Activated CD4-positive, alpha-beta memory T cell treated with anti-CD3 and anti-CD28 coated beads, Interleukin-2, amount 10 ng/mL, durations not matched to agents 7 days and 5 days (primary cell): ENCODE measurements at regions of chr7 and their contacts with region 1.

Region 1: DNA sequence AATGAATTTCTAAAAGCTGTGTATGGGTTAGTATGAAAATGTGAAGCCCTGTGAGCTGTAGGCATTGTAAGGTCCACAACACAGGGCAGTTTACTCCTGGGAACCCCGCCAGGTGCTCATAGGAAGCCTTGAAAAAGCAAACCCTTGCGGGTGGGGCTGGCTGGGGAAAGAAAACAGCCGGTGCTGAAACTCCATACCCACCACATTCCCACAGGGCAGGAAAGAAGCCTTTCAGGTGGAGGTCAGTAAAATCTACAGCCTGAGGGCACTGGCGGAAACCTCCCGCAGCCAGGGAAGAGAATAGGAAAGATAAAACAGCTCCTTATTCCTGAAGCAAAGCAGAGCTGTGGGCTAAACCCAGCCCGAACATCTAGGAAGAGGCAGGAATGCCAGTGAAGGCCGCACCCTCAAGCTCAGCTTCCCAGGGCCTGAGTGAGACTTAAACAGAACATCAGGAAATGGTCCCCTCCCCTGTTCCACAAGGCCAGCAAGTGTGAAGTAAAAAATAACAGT is 34.7 kb downstream of the PODXL start:
- DNase-seq: no peak
- H3K4me3 Mint-ChIP-seq: peak overlapping the region; percentile 4
- H3K27ac Mint-ChIP-seq: peak overlapping the region; percentile 61
- H3K4me1 Mint-ChIP-seq: peaks cover 17% of the 10 kb centered on the region
- H3K27me3 Mint-ChIP-seq: peaks cover 7% of the 10 kb centered on the region

Region 2: DNA sequence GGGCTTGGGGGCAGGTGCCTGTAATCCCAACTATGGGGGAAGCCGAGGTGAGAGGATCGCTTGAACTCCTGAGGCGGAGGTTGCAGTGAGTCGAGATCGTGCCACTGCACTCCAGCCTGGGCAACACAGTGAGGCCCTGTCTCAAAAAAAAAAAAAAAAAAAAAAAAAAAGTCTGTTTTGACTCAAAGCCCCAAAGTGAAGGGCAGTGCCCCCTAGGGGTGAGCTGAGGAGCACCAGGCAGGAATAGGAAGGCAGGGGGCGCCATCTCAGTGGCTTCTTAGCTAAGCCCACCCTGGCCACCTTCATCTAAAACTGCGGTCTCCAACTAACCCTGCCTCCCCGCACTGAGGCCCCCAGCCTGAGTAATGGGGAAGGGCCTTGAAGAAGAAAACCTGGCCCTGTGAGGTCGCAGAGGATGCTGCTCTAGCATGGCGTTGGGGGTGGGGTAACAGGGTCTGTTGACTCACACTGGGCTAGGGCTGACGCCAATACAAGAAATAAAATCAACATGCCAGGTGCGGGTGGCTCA is 24.9 kb after region 1 on chr7:
- CTCF ChIA-PET with region 1: interaction called, 10 read pairs
- POLR2A ChIA-PET with region 1: interaction called, 3 read pairs
- DNase-seq: peak; percentile 60
- H3K4me3 Mint-ChIP-seq: no peak overlapping the region
- H3K27ac Mint-ChIP-seq: no peak overlapping the region
- H3K4me1 Mint-ChIP-seq: peaks cover 7% of the 10 kb centered on the region
- H3K27me3 Mint-ChIP-seq: no peaks in the 10 kb centered on the region